Lower leg skin (tissue), 4 donors: ENCODE measurements at regions of chr7 and their contacts with region 1.

Region 1: DNA sequence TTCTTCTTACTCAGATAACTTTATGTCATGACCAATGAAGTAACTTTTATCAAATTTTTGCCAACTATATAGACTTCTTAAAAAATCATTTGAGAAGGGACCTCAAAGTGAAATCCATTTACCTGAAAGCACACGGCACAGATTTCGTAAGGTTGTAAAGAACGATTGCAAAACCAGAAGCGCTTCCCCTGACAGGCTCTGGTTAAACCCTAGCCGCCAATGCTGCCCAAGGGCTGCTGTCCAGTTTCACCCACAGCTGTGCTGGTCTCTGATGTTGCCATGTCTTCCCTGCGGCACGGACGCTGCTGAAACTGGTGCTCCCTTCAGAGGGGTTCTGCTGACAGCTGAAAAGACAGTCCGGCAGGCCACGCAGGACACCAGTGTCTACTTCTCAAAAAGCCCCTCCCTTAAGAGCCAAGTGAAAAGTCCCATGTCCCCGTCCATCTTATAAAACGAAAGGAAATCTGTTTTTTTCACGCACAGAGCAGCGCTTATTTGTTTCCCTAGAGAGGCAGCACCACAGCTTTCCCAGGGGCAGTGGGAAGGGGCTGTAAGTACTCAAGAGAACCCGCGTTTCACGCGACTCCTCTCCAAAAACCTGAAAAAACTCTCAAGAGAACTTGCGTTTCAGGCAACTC is 32.5 kb downstream of the GNA12 start:
- DNase-seq: peak in 1 of 2 donors; percentile 49
- H3K4me3 ChIP-seq: no peak overlapping the region
- CTCF ChIP-seq: no peak
- POLR2A ChIP-seq: no peak

Region 2: GRCh38 chr7:2608921-2609411 is 202.6 kb before region 1 on chr7:
- intact Hi-C with region 1: no loop called
- DNase-seq: no peak
- H3K4me3 ChIP-seq: no peak overlapping the region
- CTCF ChIP-seq: no peak
- POLR2A ChIP-seq: no peak

Region 3: GRCh38 chr7:3180604-3181003 is 369.0 kb after region 1 on chr7:
- intact Hi-C with region 1: loop called (anchors 5 kb)
- DNase-seq: no peak
- H3K4me3 ChIP-seq: no peak overlapping the region
- CTCF ChIP-seq: no peak
- POLR2A ChIP-seq: no peak